ENCODE measurements at regions of chr9 and their contacts with region 1.

Region 1: GRCh38 chr9:33290247-33291030 is at the start of gene NFX1:
- DNase-seq: peak; percentile 99
- ATAC-seq: peak; percentile 92
- H3K4me3 Mint-ChIP-seq: peak within 1 kb of the TSS; percentile 98
- H3K27ac Mint-ChIP-seq: peak within 1 kb of the TSS; percentile 100
- H3K4me1 Mint-ChIP-seq: peaks cover 61% of the 10 kb centered on the region
- H3K27me3 Mint-ChIP-seq: peaks cover 2% of the 10 kb centered on the region
- total RNA-seq, gene NFX1: 46.3 to 48.1 TPM

Region 2: DNA sequence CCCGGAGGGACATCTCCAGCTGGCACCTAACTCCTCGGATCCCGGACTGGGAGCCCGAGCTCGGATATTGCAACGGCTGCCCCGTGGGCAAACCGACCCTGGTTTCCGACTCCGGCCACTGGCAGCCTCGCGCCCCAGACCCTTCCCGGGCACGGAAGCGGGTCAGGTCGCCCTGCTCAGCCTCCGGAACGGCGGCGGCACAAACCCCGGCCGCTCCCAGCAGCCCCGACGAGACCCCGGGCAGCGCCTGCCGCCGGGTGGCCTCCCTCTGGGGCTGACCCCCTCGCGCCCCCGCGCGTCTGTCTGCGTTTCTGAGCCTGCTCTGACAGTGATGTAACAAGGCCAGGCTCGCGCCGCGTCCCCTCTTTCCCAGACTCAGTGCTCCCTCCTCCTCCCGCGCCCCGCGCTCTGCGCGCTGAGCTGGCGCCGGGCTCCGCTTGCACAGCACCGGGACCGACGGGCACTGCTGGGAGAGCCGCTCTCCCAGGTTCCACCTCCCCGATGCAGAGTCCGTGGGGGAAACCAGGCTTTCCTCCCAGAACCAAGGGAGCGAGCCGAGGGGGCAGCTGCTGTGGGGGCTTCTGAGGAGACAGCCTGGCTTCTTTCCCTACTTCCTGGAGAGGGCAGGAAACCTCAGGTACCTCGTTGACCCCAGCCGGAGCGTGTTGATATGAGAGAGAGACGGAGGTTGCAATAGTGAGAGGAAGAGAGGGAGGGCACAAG is 507.1 kb before region 1 on chr9 and contains the start of gene TMEM215:
- CTCF ChIA-PET with region 1: no interaction called
- DNase-seq: no peak
- ATAC-seq: no peak
- H3K4me3 Mint-ChIP-seq: no peak within 1 kb of the TSS
- H3K27ac Mint-ChIP-seq: no peak within 1 kb of the TSS
- H3K4me1 Mint-ChIP-seq: peaks cover 2% of the 10 kb centered on the region
- H3K27me3 Mint-ChIP-seq: peaks cover 55% of the 10 kb centered on the region
- total RNA-seq, gene TMEM215: not detected

Region 3: DNA sequence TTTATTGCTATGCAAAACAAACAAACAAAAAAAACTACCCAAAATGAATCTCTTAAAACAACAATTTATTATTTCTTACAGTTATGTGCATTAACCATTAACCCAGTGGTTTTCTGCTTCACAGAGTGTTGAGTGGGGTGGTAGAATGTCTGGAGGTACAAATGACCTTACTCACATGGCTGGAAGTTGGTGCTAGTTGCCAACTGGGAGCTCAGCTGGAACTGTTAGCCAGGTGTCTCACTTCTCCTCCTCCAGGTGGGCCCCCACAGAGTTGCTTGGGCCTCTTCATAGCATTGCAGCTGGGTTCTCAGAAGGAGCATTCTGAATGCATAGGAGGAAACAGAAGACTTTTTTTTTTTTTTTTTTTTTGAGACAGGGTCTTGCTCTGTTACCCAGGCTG is 112.8 kb before region 1 on chr9:
- CTCF ChIA-PET with region 1: no interaction called
- DNase-seq: no peak
- ATAC-seq: no peak
- H3K4me3 Mint-ChIP-seq: no peak overlapping the region
- H3K27ac Mint-ChIP-seq: no peak overlapping the region
- H3K4me1 Mint-ChIP-seq: no peaks in the 10 kb centered on the region
- H3K27me3 Mint-ChIP-seq: peaks cover 25% of the 10 kb centered on the region

Region 4: GRCh38 chr9:33264473-33265177 is 25.8 kb before region 1 on chr9 and contains the starts of genes BAG1 and CHMP5:
- CTCF ChIA-PET with region 1: interaction called, 11 read pairs
- DNase-seq: peak; percentile 100
- ATAC-seq: peak; percentile 87
- H3K4me3 Mint-ChIP-seq: peak within 1 kb of the TSS; percentile 86
- H3K27ac Mint-ChIP-seq: peak within 1 kb of the TSS; percentile 97
- H3K4me1 Mint-ChIP-seq: peaks cover 56% of the 10 kb centered on the region
- H3K27me3 Mint-ChIP-seq: no peaks in the 10 kb centered on the region
- total RNA-seq, gene BAG1: 74.9 to 81.0 TPM
- total RNA-seq, gene CHMP5: 114 to 130 TPM

Region 5: DNA sequence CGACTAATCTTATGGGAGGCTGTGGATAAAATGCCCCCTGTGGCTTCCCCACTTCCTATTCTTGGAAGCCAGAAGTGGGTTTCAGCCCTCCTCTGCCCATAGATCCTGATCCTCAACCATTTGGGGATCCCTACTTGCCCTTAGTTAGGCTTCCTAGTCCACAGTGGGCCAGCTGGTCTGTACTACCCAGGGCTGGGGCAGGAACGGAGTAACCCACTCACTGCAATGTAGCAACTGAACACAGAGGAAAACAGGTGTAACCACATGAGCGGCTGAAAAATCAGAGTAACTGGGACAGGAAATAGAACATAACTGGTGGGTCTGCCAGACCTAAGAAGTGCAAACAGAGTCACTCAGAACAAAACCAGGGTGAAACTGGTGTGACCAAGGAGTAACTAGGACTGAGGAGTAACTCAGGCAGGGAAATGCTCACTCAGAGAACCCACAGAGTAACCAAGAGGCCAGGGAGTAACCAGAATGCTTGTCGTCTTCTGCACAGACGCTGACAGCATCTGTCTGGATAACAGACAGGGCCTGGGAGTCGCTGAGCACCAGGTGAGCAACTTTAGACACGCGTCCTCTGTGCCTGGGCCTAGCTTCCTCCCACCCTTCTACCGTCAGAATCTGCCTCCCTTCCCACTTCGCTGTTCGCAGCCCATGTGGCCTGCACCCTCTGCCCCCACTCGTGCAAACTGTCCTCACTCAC is 156.0 kb after region 1 on chr9:
- CTCF ChIA-PET with region 1: no interaction called
- DNase-seq: peak; percentile 87
- ATAC-seq: peak; percentile 77
- H3K4me3 Mint-ChIP-seq: peak overlapping the region; percentile 78
- H3K27ac Mint-ChIP-seq: peak overlapping the region; percentile 88
- H3K4me1 Mint-ChIP-seq: peaks cover 36% of the 10 kb centered on the region
- H3K27me3 Mint-ChIP-seq: no peaks in the 10 kb centered on the region

Region 6: DNA sequence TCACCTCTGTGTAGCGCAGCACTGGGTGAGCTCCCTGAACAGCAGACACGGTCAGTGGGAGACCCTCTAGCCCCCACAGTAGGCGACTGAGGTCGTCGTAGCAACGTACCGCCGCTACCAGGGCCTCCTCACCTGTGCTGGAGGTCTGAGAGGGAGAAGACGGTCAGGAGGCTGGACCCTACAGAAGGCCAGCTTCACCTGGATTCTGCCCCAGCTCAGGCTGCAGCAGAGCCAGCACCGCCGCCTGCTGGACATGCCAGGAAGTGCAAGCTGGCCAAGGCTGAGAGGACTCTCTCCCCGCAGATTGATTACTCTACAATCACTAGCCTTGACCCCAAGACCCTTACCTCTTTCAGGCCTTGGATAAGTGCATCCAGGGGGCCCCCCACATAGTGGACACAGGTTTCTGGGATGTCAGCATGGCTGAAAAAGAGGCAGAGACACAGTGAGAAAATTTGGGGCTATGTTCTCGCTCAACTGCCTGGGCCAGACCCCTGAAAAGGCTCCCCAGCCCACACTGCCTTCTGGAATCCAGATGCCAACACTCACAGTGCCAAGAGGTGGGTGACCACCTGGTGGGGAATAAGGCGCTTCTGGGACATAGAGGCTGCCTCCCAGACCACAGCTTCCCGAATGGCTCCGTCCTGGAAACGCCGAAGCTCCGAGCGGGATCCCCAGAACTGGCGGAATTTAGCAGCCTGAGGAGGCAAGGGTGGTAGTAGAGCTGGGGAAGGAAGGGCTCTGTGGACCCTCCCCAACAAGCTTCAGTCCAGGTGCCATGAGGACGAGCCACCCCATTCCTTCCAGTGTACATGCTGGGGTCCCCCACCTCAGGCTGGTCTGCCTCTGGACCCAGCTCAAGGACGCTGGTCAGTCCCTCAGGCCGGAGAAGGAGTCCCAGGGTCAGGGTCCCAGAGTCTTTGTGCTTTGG is 176.4 kb after region 1 on chr9:
- CTCF ChIA-PET with region 1: interaction called, 12 read pairs
- DNase-seq: peak; percentile 78
- ATAC-seq: peak; percentile 81
- H3K4me3 Mint-ChIP-seq: no peak overlapping the region
- H3K27ac Mint-ChIP-seq: no peak overlapping the region
- H3K4me1 Mint-ChIP-seq: peaks cover 8% of the 10 kb centered on the region
- H3K27me3 Mint-ChIP-seq: no peaks in the 10 kb centered on the region